ENCODE measurements at regions of chr2 and their contacts with region 1.

Region 1: GRCh38 chr2:10408649-10409579 is 39.2 kb downstream of the ODC1 start:
- DNase-seq: peak; percentile 91
- H3K27ac ChIP-seq: peak overlapping the region; percentile 98
- CTCF ChIP-seq: peak; percentile 97

Region 2: GRCh38 chr2:10072656-10073480 is 336.0 kb before region 1 on chr2:
- CTCF ChIA-PET with region 1: interaction called, 13 read pairs
- POLR2A ChIA-PET with region 1: no interaction called
- DNase-seq: peak; percentile 87
- H3K27ac ChIP-seq: no peak overlapping the region
- CTCF ChIP-seq: peak; percentile 86

Region 3: DNA sequence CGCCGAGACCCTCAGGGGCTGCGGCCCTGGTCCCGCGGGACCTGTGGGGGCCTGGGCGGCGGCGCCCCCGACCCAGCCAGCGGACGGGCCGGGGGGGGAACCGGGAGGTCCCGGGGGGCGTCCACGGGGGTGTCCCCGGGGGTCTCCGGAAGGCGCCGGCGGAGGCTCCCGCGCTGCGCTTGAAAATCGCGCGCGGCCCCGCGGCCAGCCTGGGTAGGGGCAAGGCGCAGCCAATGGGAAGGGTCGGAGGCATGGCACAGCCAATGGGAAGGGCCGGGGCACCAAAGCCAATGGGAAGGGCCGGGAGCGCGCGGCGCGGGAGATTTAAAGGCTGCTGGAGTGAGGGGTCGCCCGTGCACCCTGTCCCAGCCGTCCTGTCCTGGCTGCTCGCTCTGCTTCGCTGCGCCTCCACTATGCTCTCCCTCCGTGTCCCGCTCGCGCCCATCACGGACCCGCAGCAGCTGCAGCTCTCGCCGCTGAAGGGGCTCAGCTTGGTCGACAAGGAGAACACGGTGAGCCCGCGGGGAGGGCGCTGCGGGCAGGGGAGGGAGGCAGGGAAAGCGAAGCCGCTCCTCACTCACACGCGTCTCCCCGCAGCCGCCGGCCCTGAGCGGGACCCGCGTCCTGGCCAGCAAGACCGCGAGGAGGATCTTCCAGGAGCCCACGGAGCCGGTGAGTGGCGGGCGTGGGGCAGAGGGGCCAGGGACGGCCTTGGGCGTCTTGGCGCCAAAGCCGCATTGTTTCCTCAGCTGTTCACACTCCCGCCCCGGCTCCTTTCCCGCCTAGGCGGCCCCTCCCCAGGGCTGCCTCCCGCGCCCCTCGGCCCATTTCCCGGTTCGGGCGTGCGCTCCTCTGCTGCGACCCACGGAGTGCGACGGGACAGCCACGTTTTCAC is 286.3 kb before region 1 on chr2 and contains the start of gene RRM2:
- CTCF ChIA-PET with region 1: interaction called, 13 read pairs
- POLR2A ChIA-PET with region 1: interaction called, 4 read pairs
- DNase-seq: peak; percentile 98
- H3K27ac ChIP-seq: peak within 1 kb of the TSS; percentile 93
- CTCF ChIP-seq: no peak

Region 4: DNA sequence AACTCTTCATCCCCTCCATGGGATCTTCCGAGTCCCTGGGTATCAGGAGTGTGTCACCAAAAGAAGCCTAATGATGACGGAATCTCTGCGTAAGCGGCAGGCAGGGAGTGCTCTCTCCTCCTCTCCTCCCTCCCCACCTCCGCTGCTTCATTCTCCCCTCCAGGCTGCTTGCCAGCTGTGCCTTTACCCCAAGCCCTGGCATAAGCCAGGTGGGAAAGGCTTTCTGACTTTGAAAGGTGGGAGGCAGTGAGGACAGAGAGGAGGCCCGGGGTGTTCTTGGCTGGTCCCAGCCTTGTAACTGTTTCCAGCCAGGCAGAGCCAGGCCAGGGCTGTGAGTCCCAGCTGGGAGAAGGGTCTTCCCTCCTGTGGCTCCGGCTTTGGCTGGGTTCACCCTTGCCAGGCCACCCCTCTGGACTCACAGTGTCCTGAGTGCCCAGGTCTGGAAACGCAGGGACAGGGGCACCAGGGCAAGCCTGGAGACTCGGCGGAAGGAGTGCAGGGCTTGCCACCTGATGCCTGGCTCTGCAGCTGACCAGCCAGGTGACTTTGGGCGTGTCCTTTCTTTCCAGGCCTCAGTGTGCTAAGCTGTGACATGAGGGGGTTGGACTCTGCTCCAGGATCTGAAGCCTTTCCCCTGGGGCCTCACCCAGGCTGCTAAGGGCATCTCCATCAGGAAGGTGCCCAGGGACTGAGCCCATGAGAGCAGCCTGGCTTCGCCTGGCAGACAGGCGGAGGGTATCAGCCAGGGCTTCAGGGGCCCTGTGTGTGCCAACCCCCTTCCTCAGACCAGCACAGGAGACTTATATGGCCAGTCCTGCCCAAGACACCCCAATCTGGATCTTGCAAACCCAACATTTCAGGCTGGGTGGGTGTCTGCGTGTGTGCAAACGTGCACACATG is 139.0 kb before region 1 on chr2:
- CTCF ChIA-PET with region 1: interaction called, 14 read pairs
- POLR2A ChIA-PET with region 1: no interaction called
- DNase-seq: no peak
- H3K27ac ChIP-seq: peak overlapping the region; percentile 21; the same call in 1 of the 2 replicates
- CTCF ChIP-seq: no peak

Region 5: GRCh38 chr2:10301946-10302478 is 106.9 kb before region 1 on chr2:
- CTCF ChIA-PET with region 1: interaction called, 9 read pairs
- POLR2A ChIA-PET with region 1: interaction called, 10 read pairs
- DNase-seq: no peak
- H3K27ac ChIP-seq: peak overlapping the region; percentile 80
- CTCF ChIP-seq: no peak

Region 6: DNA sequence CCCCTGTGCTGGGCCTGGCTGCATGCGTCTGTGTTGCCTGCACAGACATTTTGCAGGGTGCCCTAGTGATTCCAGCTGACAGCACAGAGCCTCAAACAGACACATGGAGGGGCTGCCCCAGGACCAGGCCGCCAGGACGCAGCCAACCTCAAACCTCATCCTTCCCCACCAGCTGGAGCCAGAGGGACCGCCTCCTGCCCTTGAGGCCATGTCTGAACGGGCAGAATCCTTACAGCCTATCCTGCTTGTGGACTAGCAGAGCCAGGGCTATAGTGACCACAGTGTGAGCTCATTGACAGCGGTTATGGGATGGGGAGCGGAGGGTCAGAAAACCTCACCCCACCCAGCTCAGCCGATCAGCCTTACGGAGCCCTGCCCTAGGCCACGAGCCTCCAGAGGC is 16.8 kb after region 1 on chr2:
- CTCF ChIA-PET with region 1: no interaction called
- POLR2A ChIA-PET with region 1: no interaction called
- DNase-seq: no peak
- H3K27ac ChIP-seq: no peak overlapping the region
- CTCF ChIP-seq: no peak

Region 7: DNA sequence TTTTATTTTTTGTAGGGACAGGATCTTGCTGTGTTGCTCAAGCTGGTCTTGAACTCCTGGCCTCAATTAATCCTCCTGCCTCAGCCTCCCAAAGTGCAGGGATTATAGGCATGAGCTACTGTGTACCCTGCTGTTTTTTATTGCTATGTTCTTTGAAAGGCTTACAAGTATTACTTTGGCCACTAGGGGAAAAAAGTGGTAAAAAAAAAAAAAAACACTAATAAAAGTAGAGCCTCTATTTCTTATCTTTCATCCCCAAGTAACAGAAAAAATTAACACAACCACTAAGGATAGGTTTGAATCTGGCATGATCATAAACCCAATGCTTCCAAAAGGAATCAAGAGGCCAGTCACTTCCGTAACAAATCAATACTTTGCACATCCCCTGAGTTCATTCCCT is 269.3 kb after region 1 on chr2:
- CTCF ChIA-PET with region 1: interaction called, 11 read pairs
- POLR2A ChIA-PET with region 1: no interaction called
- DNase-seq: peak; percentile 15
- H3K27ac ChIP-seq: no peak overlapping the region
- CTCF ChIP-seq: peak; percentile 20; the same call in 1 of the 2 replicates